ENCODE measurements at regions of chr7 and their contacts with region 1.

Region 1: DNA sequence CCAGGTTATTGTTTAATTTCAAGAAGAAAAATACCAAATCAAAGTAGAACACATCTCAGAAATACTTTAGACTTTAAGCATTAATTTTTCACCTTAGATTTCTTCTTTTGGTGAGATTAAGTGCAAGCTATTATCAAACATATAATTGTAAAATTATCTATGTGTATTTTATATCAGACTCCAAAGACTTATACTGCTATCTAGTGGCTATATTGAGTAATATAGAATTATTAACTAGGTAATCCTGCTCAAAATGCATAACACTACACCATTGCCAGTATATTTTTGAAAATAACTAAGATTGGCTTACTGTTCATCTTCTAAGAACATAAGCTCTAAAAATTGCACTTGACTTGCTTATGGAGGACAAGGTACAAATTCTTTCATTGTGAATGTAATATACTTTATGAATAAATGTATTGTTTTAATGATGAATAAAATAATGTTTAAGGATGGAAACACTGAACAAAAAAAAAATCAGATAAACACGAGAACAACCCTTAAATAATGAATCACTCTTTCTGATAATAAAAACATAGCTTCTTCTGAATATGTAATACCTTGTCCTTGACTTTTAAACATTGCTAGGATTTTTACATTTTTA is 86.7 kb upstream of the GNAI1 start:
- DNase-seq: no peak
- H3K4me3 Mint-ChIP-seq: no peak overlapping the region
- H3K27ac Mint-ChIP-seq: no peak overlapping the region
- H3K4me1 Mint-ChIP-seq: no peaks in the 10 kb centered on the region
- H3K27me3 Mint-ChIP-seq: peaks cover 29% of the 10 kb centered on the region
- CTCF ChIP-seq: peak; percentile 33

Region 2: DNA sequence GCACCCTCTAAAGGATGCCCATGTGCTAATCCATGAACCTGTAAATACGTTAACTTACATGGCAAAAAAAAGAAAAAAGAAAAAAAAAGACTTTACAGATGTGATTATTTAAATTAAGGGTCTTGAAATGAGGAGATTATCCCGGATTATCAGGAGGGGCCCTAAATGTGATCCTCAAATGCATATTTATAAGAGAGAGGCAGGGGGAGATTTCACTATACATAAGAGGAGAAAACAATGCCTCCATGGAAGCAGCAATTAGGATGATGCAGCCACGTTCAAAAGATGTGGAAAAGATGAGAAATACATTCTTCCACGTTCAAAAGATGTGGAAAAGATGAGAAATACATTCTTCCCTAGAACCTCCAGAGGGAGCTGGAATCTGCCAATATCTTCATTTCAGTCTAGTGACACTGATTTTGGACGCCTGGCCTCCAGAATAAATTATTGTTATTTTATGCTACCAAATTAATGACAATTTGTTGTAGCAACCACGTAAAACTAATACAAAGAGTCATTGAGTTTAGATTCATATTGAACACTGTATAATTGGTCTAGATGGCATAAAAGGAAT is 241.7 kb before region 1 on chr7:
- CTCF ChIA-PET with region 1: no interaction called
- POLR2A ChIA-PET with region 1: no interaction called
- intact Hi-C with region 1: loop called (anchors 2 kb)
- DNase-seq: peak; percentile 9
- H3K4me3 Mint-ChIP-seq: no peak overlapping the region
- H3K27ac Mint-ChIP-seq: no peak overlapping the region
- H3K4me1 Mint-ChIP-seq: no peaks in the 10 kb centered on the region
- H3K27me3 Mint-ChIP-seq: peaks cover 99% of the 10 kb centered on the region
- CTCF ChIP-seq: peak; percentile 36